Breast epithelium (tissue), 4 donors: ENCODE measurements at regions of chr2 and their contacts with region 1.

Region 1: GRCh38 chr2:149422339-149423309 is 92.2 kb downstream of the LYPD6 start:
- DNase-seq: no peak
- H3K4me3 ChIP-seq: no peak overlapping the region
- H3K27ac ChIP-seq: no peak overlapping the region
- H3K4me1 ChIP-seq: peaks cover 0 to 3% of the 10 kb centered on the region in 2 donors
- H3K27me3 ChIP-seq: no peaks in the 10 kb centered on the region
- CTCF ChIP-seq: no peak
- POLR2A ChIP-seq: no peak

Region 2: DNA sequence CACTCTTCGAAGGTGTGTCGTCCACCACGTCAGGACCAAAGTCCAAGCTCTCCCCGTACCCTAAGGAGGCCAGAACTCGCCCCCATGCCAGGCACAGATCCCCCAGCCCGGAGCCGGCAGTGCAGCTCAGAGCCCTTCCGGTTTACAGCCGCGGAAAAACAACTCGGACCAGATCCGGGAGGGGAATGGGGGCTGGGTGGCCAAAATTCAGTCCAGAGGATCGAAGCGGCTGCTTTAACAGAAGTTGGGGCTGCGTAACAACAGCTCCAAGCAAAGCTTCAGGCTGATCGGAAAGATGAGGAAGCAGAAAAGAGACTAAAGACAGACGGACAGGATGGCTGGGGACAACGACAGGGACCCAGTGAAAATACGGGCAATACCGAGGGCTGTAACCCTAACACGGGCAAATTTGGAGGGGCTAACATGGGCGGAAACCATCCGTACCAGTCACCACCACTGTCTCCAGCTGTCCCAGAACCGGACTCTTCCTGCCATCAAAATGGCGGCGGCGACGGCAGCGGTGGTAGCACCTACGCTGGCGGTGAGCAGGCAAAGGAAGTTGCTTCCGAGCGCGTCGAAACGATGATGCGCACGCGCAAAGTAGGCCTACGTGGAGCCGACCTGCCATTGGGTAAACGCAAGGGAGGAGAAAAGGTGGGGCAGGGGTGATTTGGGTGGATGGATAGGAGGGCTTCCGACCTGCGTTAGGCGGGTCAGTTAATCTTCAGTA is 164.8 kb after region 1 on chr2 and contains the start of gene MMADHC:
- intact Hi-C with region 1: no loop called
- DNase-seq: peak; percentile 91
- H3K4me3 ChIP-seq: peak within 1 kb of the TSS; percentile 79 to 86 (median 80)
- H3K27ac ChIP-seq: peak within 1 kb of the TSS; percentile 97 to 98
- H3K4me1 ChIP-seq: no peaks in the 10 kb centered on the region
- H3K27me3 ChIP-seq: no peaks in the 10 kb centered on the region
- CTCF ChIP-seq: no peak
- POLR2A ChIP-seq: peak; percentile 82
- total RNA-seq, gene MMADHC: 84.2 to 111 (median 109) TPM

Region 3: GRCh38 chr2:151150331-151151320 is 1728.0 kb after region 1 on chr2:
- intact Hi-C with region 1: loop called (anchors 5 kb)
- DNase-seq: no peak
- H3K4me3 ChIP-seq: no peak overlapping the region
- H3K27ac ChIP-seq: no peak overlapping the region
- H3K4me1 ChIP-seq: no peaks in the 10 kb centered on the region
- H3K27me3 ChIP-seq: no peaks in the 10 kb centered on the region
- CTCF ChIP-seq: no peak
- POLR2A ChIP-seq: no peak